ENCODE measurements at regions of chr14 and their contacts with region 1.

Region 1: DNA sequence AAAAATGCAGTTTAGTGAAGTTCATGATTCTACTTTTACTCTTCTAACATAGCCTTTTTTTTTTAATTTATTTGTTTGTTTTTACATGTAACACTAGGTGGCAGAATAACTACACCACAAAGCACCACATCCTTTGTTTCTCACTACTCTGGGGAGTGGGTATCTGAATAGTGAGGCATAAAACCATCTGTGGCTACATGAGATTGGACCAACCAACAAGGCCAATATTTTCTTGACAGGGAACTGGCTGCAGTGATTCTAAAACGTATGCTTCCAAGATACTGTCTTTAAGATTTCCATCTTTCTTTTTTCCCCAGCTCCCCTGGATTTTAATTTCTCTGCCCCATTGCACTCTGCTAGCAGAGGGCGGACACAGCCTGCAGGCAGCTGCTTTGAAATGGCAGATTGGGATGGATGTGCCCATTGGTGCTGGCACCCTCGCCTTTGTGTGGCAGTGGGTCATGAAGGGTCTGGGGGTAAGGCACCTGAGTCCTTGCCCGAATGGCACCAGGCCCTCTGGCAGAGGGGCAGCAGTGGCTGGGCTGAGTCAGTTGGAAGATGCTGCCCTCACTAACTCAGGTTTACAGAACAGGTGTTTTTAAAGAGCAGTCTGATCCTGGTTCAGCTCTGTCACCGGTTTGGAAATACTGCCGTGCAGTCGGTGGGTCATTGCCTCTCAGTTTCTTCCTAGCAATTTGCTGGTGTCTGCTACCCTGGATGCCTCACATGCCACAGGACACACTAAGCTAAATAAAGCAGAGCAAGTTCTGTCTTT is 429.1 kb downstream of the RAD51B start:
- DNase-seq: peak in 2 of 3 donors; percentile 23 to 58
- ATAC-seq: peak; percentile 72 to 82 (median 76)
- H3K4me3 ChIP-seq: no peak overlapping the region
- H3K27ac ChIP-seq: peak overlapping the region; percentile 66 to 77 (median 72)
- H3K4me1 ChIP-seq: peaks cover 0 to 45% (median 15%) of the 10 kb centered on the region in 4 donors
- H3K27me3 ChIP-seq: no peaks in the 10 kb centered on the region
- CTCF ChIP-seq: peak; percentile 58 to 75 (median 60)
- POLR2A ChIP-seq: no peak

Region 2: GRCh38 chr14:68199554-68200151 is 49.0 kb before region 1 on chr14:
- intact Hi-C with region 1: loop called in 1 of 2 experiments (anchors 10 kb)
- DNase-seq: peak in 1 of 3 donors; percentile 53
- ATAC-seq: peak; percentile 49 to 77 (median 57)
- H3K4me3 ChIP-seq: no peak overlapping the region
- H3K27ac ChIP-seq: peak overlapping the region; percentile 56 to 87 (median 77)
- H3K4me1 ChIP-seq: peaks cover 0 to 41% (median 11%) of the 10 kb centered on the region in 4 donors
- H3K27me3 ChIP-seq: no peaks in the 10 kb centered on the region
- CTCF ChIP-seq: no peak
- POLR2A ChIP-seq: no peak

Region 3: DNA sequence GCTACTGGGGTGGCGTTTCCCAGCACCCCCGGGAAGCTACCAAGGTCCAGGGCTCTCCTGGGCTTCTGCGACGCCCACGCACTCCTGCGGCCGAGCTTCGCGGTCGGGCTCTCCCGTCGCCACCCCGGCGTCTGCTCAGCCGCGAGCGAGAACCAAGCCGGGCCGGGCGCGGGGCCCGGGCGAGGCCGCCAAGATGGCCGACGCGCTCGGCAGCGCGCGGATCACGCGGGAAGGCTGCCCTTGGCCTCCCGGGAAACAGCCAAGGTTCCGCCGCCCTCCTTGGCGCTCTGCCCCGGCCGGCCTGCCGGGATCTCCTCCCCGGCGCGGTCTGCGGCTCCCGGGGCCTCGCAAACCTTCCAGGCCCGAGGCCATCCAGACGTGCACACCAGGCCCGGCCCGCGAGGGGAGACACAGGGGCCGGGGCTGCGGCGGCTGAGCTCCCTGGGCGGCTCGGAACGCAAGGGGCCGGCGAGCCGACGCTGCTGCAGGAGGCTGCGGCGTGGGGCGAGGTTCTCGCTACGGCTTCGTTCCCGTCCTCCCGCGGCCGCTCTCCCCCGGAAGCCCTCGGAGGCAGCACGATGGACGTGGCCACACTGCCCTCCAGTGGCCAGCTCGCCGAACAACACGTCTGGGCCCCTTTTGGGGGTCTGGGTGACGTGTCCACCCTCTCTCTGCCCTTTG is 567.7 kb after region 1 on chr14:
- intact Hi-C with region 1: loop called (anchors 5 to 10 kb)
- DNase-seq: peak; percentile 92 to 94 (median 93)
- ATAC-seq: peak; percentile 70 to 87 (median 76)
- H3K4me3 ChIP-seq: peak overlapping the region; percentile 55 to 66 (median 65)
- H3K27ac ChIP-seq: peak overlapping the region; percentile 98 to 100 (median 100)
- H3K4me1 ChIP-seq: peaks cover 0 to 66% (median 29%) of the 10 kb centered on the region in 4 donors
- H3K27me3 ChIP-seq: no peaks in the 10 kb centered on the region
- CTCF ChIP-seq: peak; percentile 95 to 99 (median 96)
- POLR2A ChIP-seq: peak; percentile 85